ENCODE measurements at regions of chr6 and their contacts with region 1.

Region 1: GRCh38 chr6:167485186-167485978 is 160.5 kb downstream of the TTLL2 start:
- DNase-seq: no peak
- H3K4me3 ChIP-seq: no peak overlapping the region
- H3K27ac ChIP-seq: no peak overlapping the region
- H3K4me1 ChIP-seq: no peaks in the 10 kb centered on the region
- H3K27me3 ChIP-seq: no peaks in the 10 kb centered on the region
- CTCF ChIP-seq: peak; percentile 38 to 68 (median 59)

Region 2: DNA sequence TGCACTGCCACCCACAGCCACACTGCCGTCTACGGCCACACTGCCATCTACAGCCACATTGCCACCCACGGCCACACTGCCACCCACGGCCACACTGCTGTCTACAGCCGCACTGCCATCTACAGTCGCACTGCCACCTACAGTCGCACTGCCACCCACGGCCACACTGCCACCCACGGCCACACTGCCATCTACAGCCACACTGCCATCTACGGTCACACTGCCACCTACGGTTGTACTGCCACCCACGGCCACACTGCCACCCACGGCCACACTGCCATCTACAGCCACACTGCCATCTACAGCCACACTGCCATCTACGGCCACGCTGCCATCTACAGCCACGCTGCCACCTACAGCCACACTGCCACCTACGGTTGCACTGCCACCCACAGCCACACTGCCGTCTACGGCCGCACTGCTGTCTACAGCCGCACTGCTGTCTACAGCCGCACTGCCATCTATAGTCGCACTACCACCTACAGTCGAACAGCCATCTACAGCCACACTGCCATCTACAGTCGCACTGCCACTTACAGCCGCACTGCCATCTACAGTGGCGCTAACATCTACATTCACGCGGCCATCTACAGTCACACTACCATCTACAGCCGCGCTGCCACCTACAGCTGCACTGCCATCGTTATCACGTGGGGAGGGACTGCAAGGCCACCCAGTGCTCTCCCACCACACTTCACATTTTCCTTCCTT is 186.8 kb after region 1 on chr6:
- intact Hi-C with region 1: loop called (anchors 1 kb)
- DNase-seq: no peak
- H3K4me3 ChIP-seq: no peak overlapping the region
- H3K27ac ChIP-seq: no peak overlapping the region
- H3K4me1 ChIP-seq: no peaks in the 10 kb centered on the region
- H3K27me3 ChIP-seq: no peaks in the 10 kb centered on the region
- CTCF ChIP-seq: no peak

Region 3: DNA sequence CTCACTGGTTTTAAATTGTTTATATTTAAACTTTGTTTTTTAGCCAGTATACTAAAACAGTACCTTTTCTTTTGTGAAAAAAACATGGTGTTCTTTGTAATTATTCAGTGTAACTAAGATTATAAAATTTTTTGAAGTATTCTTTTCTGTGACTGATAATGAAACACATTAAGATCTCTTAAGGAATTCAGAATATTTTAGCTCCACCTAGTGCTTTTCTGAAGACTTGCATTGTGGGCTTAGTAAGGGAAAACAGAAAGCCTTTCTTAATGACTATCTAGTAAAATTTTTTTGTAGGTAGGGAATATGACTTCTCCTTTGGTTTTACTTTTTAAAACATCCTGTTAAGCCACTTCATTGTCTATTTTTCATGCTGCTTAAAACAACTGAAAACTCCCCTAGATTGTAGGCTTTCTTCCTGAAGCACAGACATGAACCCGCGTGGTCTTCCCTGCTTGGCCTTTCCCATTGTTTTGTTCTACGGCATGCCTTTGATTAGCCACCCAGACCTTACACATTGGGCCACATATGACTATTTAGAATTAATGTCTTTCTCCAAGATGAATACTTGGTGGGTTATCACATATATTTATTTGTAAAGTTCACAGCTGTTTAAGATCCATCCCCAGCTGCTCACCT is 413.4 kb after region 1 on chr6:
- intact Hi-C with region 1: loop called (anchors 5 kb)
- DNase-seq: no peak
- H3K4me3 ChIP-seq: no peak overlapping the region
- H3K27ac ChIP-seq: no peak overlapping the region
- H3K4me1 ChIP-seq: no peaks in the 10 kb centered on the region
- H3K27me3 ChIP-seq: no peaks in the 10 kb centered on the region
- CTCF ChIP-seq: peak; percentile 40 to 73 (median 68)

Region 4: GRCh38 chr6:168088161-168089053 is 603.0 kb after region 1 on chr6:
- intact Hi-C with region 1: no loop called
- DNase-seq: no peak
- H3K4me3 ChIP-seq: no peak overlapping the region
- H3K27ac ChIP-seq: no peak overlapping the region
- H3K4me1 ChIP-seq: no peaks in the 10 kb centered on the region
- H3K27me3 ChIP-seq: no peaks in the 10 kb centered on the region
- CTCF ChIP-seq: no peak

Measured in ascending aorta (tissue), 2 donors.